ENCODE measurements at regions of chr17 and their contacts with region 1.

Region 1: DNA sequence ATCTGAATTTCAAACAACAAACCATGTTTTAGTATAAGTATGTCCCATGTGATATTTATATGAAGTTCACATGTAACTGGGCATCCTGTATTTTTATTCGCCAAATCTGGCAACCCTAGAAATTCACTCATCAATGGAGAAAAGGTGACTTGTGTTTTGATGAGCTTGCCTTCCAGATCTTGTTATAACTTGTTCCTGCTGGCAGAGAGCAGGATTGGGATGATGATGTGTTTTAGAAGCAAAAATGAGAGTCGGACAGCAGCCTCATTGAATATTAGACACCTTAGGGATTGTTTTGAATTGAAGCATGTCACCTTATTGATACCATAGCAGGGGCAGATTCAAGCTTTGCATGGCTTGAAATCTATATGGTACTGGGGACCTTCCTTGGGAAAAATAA is 85.4 kb upstream of the MED13 start:
- DNase-seq: no peak
- H3K4me3 ChIP-seq: no peak overlapping the region
- H3K27me3 ChIP-seq: no peaks in the 10 kb centered on the region
- CTCF ChIP-seq: no peak

Region 2: DNA sequence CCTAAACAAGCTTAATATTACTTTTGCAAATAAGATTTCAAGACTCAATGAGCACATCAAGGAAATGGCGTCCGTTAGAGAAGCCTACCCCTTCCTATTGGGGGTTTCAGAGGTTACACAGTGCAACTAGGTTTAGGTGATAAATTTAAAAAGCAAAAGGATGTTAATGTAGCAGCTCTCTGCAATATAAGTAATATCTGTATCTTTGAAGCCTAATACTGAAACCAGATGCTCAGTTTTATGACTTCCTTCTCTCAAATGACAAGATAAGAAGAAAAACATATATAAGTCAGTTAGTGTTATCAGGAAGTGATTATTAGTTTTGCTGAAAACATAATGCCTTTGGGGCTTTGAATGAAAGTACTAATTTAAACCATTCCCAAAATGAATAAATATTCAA is 31.1 kb before region 1 on chr17:
- CTCF ChIA-PET with region 1: no interaction called
- POLR2A ChIA-PET with region 1: no interaction called
- DNase-seq: no peak
- H3K4me3 ChIP-seq: no peak overlapping the region
- H3K27me3 ChIP-seq: no peaks in the 10 kb centered on the region
- CTCF ChIP-seq: no peak

Region 3: DNA sequence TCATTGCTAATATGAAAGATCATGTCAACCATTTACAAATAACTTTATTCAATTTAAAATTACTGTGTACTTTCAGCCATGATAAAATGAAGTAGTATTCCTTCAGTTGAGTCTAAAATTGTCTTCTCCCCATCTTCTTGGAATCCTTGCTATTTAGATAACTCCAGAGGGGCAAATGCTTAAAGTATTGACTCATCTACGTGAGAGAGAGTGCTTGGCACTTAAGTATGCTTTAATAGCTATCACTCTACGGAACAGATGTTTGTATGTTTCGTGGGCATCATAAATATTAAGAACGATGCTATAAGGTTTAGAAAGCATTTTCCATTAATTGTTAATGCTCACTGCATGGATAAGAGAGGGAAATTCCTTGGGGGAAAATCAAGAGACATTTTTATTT is 16.1 kb before region 1 on chr17:
- CTCF ChIA-PET with region 1: no interaction called
- POLR2A ChIA-PET with region 1: no interaction called
- DNase-seq: no peak
- H3K4me3 ChIP-seq: no peak overlapping the region
- H3K27me3 ChIP-seq: peaks cover 2% of the 10 kb centered on the region; the same call in 1 of the 2 replicates
- CTCF ChIP-seq: no peak

Region 4: GRCh38 chr17:62164763-62165753 is 14.6 kb after region 1 on chr17:
- CTCF ChIA-PET with region 1: no interaction called
- POLR2A ChIA-PET with region 1: no interaction called
- DNase-seq: no peak
- H3K4me3 ChIP-seq: no peak overlapping the region
- H3K27me3 ChIP-seq: no peaks in the 10 kb centered on the region
- CTCF ChIP-seq: no peak

Region 5: DNA sequence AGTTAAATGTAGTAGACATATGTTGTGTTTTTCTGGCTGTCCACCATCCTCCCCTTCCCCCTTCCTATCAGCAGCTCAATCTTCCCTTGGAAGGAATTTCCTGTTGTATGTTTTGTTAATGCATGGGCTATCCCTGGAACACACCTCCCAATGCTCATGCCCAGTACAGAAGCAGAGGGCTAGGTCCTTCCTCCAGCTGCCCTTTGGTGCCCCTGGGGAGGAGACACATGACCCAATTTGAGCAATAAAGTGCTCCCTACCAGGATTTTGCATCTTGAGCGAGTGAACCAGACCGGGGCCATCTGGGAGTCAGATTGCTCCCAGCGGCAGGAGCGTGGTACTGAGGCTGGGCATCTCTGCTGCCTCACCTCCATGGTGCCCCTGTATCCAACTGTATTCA is 56.1 kb after region 1 on chr17:
- CTCF ChIA-PET with region 1: no interaction called
- POLR2A ChIA-PET with region 1: interaction called, 10 read pairs
- DNase-seq: no peak
- H3K4me3 ChIP-seq: no peak overlapping the region
- H3K27me3 ChIP-seq: no peaks in the 10 kb centered on the region; the same call in 1 of the 2 replicates
- CTCF ChIP-seq: no peak